CD4-positive, alpha-beta memory T cell (primary cell): ENCODE measurements at regions of chr2 and their contacts with region 1.

Region 1: GRCh38 chr2:161308178-161308955 is at the start of gene PSMD14:
- DNase-seq: peak; percentile 86 to 94 (median 87)
- H3K4me3 ChIP-seq: peak within 1 kb of the TSS; percentile 87
- H3K4me3 Mint-ChIP-seq: peak within 1 kb of the TSS; percentile 86 to 98 (median 96)
- H3K27ac ChIP-seq: peak within 1 kb of the TSS; percentile 90
- H3K27ac Mint-ChIP-seq: peak within 1 kb of the TSS; percentile 91 to 98 (median 97)
- H3K4me1 ChIP-seq: peaks cover 25% of the 10 kb centered on the region
- H3K4me1 Mint-ChIP-seq: peaks cover 28 to 49% (median 37%) of the 10 kb centered on the region in 4 donors
- H3K27me3 ChIP-seq: no peaks in the 10 kb centered on the region
- H3K27me3 Mint-ChIP-seq: no peaks in the 10 kb centered on the region
- total RNA-seq, gene PSMD14: 14.1 to 20.0 TPM

Region 2: GRCh38 chr2:159904127-159904958 is 1404.0 kb before region 1 on chr2:
- CTCF ChIA-PET with region 1: no interaction called
- POLR2A ChIA-PET with region 1: no interaction called
- intact Hi-C with region 1: loop called (anchors 2 kb)
- DNase-seq: peak; percentile 79 to 85 (median 82)
- H3K4me3 ChIP-seq: peak within 1 kb of the TSS; percentile 92 to 97
- H3K4me3 Mint-ChIP-seq: peak within 1 kb of the TSS; percentile 98 to 100 (median 99)
- H3K27ac ChIP-seq: peak within 1 kb of the TSS; percentile 82
- H3K27ac Mint-ChIP-seq: peak within 1 kb of the TSS; percentile 97 to 100 (median 98)
- H3K4me1 ChIP-seq: peaks cover 21% of the 10 kb centered on the region
- H3K4me1 Mint-ChIP-seq: peaks cover 18 to 43% (median 30%) of the 10 kb centered on the region in 4 donors
- H3K27me3 ChIP-seq: no peaks in the 10 kb centered on the region
- H3K27me3 Mint-ChIP-seq: no peaks in the 10 kb centered on the region

Region 3: GRCh38 chr2:161166538-161167409 is 141.6 kb before region 1 on chr2:
- CTCF ChIA-PET with region 1: no interaction called
- POLR2A ChIA-PET with region 1: no interaction called
- intact Hi-C with region 1: no loop called
- DNase-seq: peak; percentile 43 to 81 (median 50)
- H3K4me3 ChIP-seq: no peak overlapping the region
- H3K4me3 Mint-ChIP-seq: peak overlapping the region; percentile 12 to 82 (median 44)
- H3K27ac ChIP-seq: peak overlapping the region; percentile 43
- H3K27ac Mint-ChIP-seq: peak overlapping the region; percentile 63 to 93 (median 81)
- H3K4me1 ChIP-seq: peaks cover 97% of the 10 kb centered on the region
- H3K4me1 Mint-ChIP-seq: peaks cover 67 to 96% (median 80%) of the 10 kb centered on the region in 4 donors
- H3K27me3 ChIP-seq: no peaks in the 10 kb centered on the region
- H3K27me3 Mint-ChIP-seq: no peaks in the 10 kb centered on the region

Region 4: DNA sequence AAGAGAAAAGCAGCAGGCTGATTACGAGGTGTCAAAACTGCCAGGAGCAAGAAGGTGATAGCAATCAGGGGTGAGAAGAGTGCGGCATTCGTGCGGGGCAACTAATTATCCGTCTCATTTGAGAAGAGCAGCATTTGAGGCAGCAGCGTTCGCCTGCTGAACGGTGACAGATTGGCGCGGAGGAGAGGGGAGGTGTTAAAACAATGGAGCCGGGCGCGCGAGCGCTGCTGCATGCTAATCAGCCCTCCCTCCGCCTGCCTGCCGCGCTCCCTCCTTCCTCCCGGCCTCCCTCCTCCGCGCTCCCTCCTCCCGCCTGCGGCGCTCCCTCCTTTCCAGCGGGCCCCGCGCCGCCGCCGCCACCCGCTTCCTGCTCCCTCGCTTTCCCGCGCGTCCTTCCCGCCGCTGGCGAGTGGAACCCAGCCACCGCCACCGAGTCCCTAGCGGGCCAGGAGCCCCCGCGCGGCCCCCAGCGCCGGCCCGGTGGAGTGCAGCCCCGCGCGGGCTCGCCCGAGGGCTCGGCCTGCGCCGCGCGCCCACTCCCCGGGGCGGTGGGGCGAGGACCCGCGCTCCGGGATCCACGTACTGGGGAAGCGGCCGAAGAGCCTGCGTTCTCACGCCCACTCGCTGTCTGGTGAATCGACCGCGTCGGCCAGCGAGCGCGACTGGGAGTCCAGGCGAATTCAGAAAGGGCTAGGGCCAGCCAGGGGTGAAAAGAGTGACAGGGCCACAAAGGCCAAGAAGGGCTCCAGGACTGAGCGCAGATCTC is 69.6 kb before region 1 on chr2:
- CTCF ChIA-PET with region 1: no interaction called
- POLR2A ChIA-PET with region 1: interaction called, 3 read pairs
- intact Hi-C with region 1: loop called (anchors 5 kb)
- DNase-seq: peak; percentile 59 to 75 (median 64)
- H3K4me3 ChIP-seq: peak overlapping the region in 1 of 2 donors; percentile 75
- H3K4me3 Mint-ChIP-seq: peak overlapping the region; percentile 88 to 99 (median 94)
- H3K27ac ChIP-seq: peak overlapping the region; percentile 44
- H3K27ac Mint-ChIP-seq: peak overlapping the region; percentile 70 to 97 (median 95)
- H3K4me1 ChIP-seq: peaks cover 48% of the 10 kb centered on the region
- H3K4me1 Mint-ChIP-seq: peaks cover 32 to 73% (median 46%) of the 10 kb centered on the region in 4 donors
- H3K27me3 ChIP-seq: no peaks in the 10 kb centered on the region
- H3K27me3 Mint-ChIP-seq: no peaks in the 10 kb centered on the region

Region 5: DNA sequence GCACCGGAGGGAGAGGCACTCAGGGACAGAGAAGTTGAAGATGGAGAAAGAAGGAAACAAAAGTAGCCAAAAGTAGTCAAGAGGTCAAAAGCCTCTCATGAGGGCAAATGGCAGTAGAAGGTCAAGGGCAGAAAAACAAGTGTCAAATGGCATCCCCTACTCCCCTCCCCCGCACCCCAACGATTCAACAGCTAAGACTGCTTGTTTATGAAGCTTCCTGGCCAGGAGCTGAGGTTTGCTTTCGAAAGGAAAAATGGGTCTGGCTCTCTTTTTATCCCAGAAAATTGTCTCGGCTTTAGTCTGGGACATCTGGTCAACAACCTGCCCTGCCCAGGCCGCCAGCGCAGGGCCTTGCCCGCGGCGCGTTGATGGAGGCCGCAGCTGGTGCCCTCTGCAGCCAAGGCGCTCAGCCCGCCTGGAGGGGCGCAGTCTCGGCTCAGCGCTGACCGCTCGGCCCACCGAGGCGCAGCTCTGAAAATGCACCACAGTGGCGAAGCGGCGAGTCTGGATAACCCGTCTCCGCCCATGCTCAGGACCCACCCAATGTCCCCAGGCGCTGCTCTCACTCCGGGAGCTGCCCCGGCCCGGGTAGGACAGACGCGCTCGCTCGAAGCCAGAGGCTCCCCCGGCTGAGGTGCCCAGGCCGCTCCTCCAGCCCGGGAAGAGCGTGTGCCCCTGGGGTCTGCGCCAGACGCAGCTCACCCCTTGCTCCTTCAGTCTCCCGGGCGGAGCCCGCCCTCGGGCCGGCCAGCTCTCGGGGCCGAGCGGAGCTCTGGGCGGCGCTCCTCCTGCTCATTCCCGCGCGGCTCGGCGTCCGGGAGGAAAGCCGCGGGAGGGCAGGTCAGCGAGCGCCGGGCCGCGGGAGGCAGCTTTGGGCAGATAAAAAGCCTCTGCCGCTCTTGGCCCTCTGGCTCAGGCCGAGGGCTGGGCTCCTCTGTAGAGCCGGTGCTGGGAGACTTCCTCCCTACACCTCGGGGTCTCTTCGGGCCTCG is 106.0 kb after region 1 on chr2:
- CTCF ChIA-PET with region 1: no interaction called
- POLR2A ChIA-PET with region 1: no interaction called
- intact Hi-C with region 1: loop called (anchors 5 kb)
- DNase-seq: no peak
- H3K4me3 ChIP-seq: peak overlapping the region in 1 of 2 donors; percentile 19
- H3K4me3 Mint-ChIP-seq: peak overlapping the region; percentile 70 to 91 (median 78)
- H3K27ac ChIP-seq: no peak overlapping the region
- H3K27ac Mint-ChIP-seq: peak overlapping the region in 1 of 7 donors; percentile 54
- H3K4me1 ChIP-seq: peaks cover 54% of the 10 kb centered on the region
- H3K4me1 Mint-ChIP-seq: peaks cover 39 to 52% (median 45%) of the 10 kb centered on the region in 4 donors
- H3K27me3 ChIP-seq: peaks cover 53% of the 10 kb centered on the region
- H3K27me3 Mint-ChIP-seq: peaks cover 43 to 44% of the 10 kb centered on the region in 2 donors

Region 6: DNA sequence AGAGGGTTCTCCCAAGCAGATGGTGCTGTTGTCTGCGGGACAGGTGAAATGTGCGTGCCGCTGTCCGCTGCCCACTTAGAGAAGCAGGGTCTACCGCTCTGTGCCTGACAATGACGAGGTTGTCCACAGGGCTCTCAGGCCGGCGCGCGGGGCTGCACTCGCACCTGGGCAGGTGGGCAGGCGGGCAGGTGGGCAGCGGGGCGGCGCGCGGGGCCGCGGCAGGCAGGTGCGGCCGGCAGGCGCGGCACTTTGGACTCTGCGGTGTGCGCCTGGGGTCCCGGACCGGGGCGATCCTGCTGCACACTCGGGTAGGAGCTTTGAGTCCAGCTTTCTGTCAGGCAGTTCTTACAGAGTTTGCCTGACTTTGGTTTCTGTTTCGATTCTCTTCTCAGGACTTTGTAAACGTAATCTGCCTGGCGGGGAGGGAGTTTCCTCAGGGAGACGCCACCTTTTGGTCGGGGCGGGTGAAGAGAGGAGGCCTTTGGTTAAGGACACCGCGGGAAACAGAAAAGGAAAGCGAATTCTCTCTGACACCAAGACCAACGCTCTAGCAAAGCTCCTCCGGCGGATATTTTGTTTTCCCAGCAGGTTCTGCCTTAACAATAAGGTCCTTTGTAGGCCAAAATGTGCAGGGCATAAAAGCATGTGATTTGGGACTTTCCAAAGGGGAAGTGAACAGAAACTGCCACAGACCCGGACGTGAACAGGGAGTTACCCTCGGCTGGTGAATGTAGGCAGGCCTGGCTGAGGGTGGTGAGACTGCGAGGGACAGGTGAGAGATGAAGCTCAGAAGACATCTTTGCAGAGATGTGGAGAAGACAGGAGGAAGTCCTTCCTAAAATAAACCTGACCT is 1010.2 kb after region 1 on chr2 and contains the start of gene IFIH1:
- CTCF ChIA-PET with region 1: no interaction called
- POLR2A ChIA-PET with region 1: no interaction called
- intact Hi-C with region 1: loop called (anchors 5 kb)
- DNase-seq: peak; percentile 82 to 93 (median 83)
- H3K4me3 ChIP-seq: peak within 1 kb of the TSS; percentile 93 to 97
- H3K4me3 Mint-ChIP-seq: peak within 1 kb of the TSS; percentile 93 to 100 (median 98)
- H3K27ac ChIP-seq: peak within 1 kb of the TSS; percentile 97
- H3K27ac Mint-ChIP-seq: peak within 1 kb of the TSS; percentile 98 to 100 (median 99)
- H3K4me1 ChIP-seq: peaks cover 56% of the 10 kb centered on the region
- H3K4me1 Mint-ChIP-seq: peaks cover 48 to 65% (median 57%) of the 10 kb centered on the region in 4 donors
- H3K27me3 ChIP-seq: no peaks in the 10 kb centered on the region
- H3K27me3 Mint-ChIP-seq: no peaks in the 10 kb centered on the region
- total RNA-seq, gene IFIH1: 30.1 to 31.2 TPM